ENCODE measurements at regions of chr10 and their contacts with region 1.

Region 1: GRCh38 chr10:125160856-125161706 is 718 bp upstream of the CTBP2 start:
- DNase-seq: peak; percentile 89
- H3K4me3 ChIP-seq: peak overlapping the region; percentile 10 to 79 (median 72)
- H3K27ac ChIP-seq: peak overlapping the region; percentile 92 to 99 (median 95)
- H3K4me1 ChIP-seq: peaks cover 20 to 25% of the 10 kb centered on the region in 2 donors
- H3K27me3 ChIP-seq: no peaks in the 10 kb centered on the region
- CTCF ChIP-seq: peak in 5 of 6 experiments; percentile 10 to 51 (median 31)
- POLR2A ChIP-seq: peak in 1 of 2 donors; percentile 75

Region 2: GRCh38 chr10:124530215-124530665 is 630.8 kb before region 1 on chr10:
- intact Hi-C with region 1: no loop called
- DNase-seq: peak; percentile 86 to 89
- H3K4me3 ChIP-seq: no peak overlapping the region
- H3K27ac ChIP-seq: no peak overlapping the region
- H3K4me1 ChIP-seq: peaks cover 0 to 8% of the 10 kb centered on the region in 2 donors
- H3K27me3 ChIP-seq: no peaks in the 10 kb centered on the region
- CTCF ChIP-seq: peak; percentile 61 to 94 (median 86)
- POLR2A ChIP-seq: no peak

Region 3: DNA sequence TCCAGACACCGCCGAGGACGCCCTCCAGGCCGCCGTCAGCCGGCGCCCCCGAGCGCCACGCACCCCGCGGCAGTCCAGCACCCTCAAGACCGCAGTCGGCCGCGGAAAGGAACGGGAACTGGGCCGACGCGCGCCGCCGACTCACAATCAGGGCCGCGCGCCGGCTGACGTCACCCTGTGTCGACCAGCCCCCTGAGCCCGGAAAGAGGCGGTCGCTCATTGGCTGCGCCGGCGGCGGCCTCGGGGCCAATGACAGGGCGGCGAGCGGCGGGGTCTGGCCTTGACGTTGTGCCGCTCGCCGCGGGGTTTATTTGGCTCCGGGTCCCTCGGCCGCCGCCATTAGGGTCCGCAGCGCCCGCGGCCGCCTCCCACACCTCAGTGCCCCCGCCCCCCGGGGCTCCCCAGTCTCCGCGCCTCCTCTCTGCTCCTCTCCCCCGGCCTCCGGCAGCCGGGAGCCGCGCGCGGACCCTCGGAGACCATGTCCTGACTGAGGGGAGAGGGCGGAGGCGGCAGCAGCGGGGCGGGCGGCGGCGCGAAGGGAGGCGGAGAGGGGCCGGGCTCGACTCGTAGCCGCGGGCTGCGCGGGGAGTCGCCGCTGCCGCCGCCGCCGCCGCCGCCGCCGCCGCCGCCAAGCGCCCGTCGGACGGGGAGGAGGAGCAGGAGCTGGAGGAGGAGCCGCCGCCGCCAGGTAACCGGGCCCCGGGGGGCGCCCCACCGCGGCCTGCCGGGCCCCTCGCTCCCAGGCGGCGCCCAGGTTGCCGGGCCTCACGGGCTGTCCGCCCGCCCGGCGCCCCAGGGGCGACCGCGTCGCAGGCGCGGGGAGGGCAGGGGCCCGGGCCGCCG is 244.3 kb before region 1 on chr10:
- intact Hi-C with region 1: loop called (anchors 10 kb)
- DNase-seq: peak; percentile 99
- H3K4me3 ChIP-seq: peak overlapping the region; percentile 56 to 76 (median 69)
- H3K27ac ChIP-seq: peak overlapping the region; percentile 96 to 98 (median 97)
- H3K4me1 ChIP-seq: peaks cover 13 to 21% of the 10 kb centered on the region in 2 donors
- H3K27me3 ChIP-seq: no peaks in the 10 kb centered on the region
- CTCF ChIP-seq: no peak
- POLR2A ChIP-seq: peak in 1 of 2 donors; percentile 97

Region 4: GRCh38 chr10:125060826-125061556 is 100.1 kb before region 1 on chr10:
- intact Hi-C with region 1: loop called (anchors 5 kb)
- DNase-seq: peak; percentile 91 to 93
- H3K4me3 ChIP-seq: no peak overlapping the region
- H3K27ac ChIP-seq: peak overlapping the region; percentile 64 to 94 (median 88)
- H3K4me1 ChIP-seq: peaks cover 93 to 100% of the 10 kb centered on the region in 2 donors
- H3K27me3 ChIP-seq: no peaks in the 10 kb centered on the region
- CTCF ChIP-seq: peak; percentile 64 to 91 (median 84)
- POLR2A ChIP-seq: peak in 1 of 2 donors; percentile 27

Region 5: DNA sequence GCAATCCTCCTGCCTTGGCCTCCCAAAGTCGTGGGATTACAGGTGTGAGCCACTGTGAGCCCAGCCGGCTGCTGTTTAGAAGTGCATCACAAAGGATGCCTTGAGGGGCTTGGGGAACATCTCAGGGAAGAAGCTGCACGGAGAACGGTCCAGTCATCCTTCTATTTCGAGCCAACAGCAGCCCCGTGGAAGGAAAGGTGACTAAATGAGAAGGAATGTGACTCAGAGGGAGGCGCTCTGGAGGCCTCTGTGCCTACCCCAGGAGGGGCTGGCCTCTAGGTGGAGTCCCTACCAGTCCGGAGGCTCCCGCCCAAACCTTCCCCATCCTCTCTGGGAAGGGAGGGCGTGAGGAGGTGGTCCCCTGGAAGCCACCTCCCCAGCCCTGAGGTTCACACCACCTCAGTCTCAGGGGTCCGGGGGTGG is 76.9 kb before region 1 on chr10:
- intact Hi-C with region 1: loop called (anchors 10 kb)
- DNase-seq: peak; percentile 68 to 79
- H3K4me3 ChIP-seq: no peak overlapping the region
- H3K27ac ChIP-seq: peak overlapping the region; percentile 88 to 96 (median 94)
- H3K4me1 ChIP-seq: peaks cover 67 to 82% of the 10 kb centered on the region in 2 donors
- H3K27me3 ChIP-seq: no peaks in the 10 kb centered on the region
- CTCF ChIP-seq: no peak
- POLR2A ChIP-seq: no peak